IMR-90 (cell line): ENCODE measurements at regions of chr7 and their contacts with region 1.

Region 1: GRCh38 chr7:45033261-45033930 is 33.4 kb downstream of the CCM2 start:
- DNase-seq: peak; percentile 55
- ATAC-seq: peak; percentile 58
- H3K4me3 ChIP-seq: no peak overlapping the region
- H3K27ac ChIP-seq: peak overlapping the region; percentile 26; the same call in 1 of the 2 replicates
- H3K4me1 ChIP-seq: peaks cover 9% of the 10 kb centered on the region
- H3K27me3 ChIP-seq: no peaks in the 10 kb centered on the region
- CTCF ChIP-seq: no peak
- POLR2A ChIP-seq: no peak
- RAD21 ChIP-seq: no peak

Region 2: GRCh38 chr7:44398511-44398911 is 634.9 kb before region 1 on chr7:
- CTCF ChIA-PET with region 1: no interaction called
- POLR2A ChIA-PET with region 1: no interaction called
- dilution Hi-C with region 1: no loop called
- in situ Hi-C with region 1: no loop called
- intact Hi-C with region 1: no loop called
- DNase-seq: no peak
- ATAC-seq: no peak
- H3K4me3 ChIP-seq: no peak overlapping the region
- H3K27ac ChIP-seq: no peak overlapping the region
- H3K4me1 ChIP-seq: peaks cover 13% of the 10 kb centered on the region
- H3K27me3 ChIP-seq: no peaks in the 10 kb centered on the region
- CTCF ChIP-seq: no peak
- POLR2A ChIP-seq: no peak
- RAD21 ChIP-seq: no peak

Region 3: DNA sequence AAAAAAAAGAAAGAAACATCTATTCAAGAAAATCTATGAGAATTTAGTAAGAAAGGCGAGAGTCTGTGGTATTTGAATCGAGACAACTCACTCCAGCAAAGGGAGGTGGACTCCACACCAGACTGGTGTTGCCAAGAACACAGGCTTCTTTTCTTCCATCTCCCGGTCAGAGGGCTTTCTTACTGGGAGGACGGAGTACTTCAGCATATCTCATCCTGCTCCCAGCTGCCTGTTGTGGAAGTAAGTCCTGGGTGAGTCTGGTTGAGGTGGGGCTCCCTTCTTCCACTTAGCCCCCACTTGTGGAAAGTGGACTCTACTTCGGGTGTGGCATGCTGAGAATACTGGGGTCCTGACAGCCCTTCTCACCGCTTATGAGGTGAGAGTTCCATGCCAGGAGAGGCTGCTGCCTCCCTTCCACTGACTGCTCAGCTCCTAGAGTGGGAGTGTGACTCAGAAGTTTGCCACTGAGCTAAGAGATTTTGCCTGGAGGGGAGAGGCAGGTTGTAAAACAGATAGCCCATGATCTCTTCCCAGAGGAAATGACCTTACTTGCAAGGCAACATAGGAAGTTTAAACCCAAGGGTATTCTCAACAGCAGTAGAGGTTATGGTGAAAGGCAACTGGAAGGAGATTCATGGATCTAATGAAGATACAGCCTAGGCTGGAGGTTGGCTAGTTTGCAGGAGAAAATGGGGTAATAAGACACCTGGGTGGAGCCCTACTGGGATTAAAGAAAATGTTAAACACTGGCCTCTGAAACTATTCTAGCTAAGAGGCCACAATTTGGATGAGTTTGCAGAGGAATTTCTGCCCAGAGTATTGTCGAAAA is 58.9 kb after region 1 on chr7:
- CTCF ChIA-PET with region 1: no interaction called
- POLR2A ChIA-PET with region 1: interaction called, 3 read pairs
- dilution Hi-C with region 1: loop called (anchors 10 kb)
- in situ Hi-C with region 1: no loop called
- intact Hi-C with region 1: no loop called
- DNase-seq: peak; percentile 52
- ATAC-seq: peak; percentile 33; the same call in 1 of the 2 replicates
- H3K4me3 ChIP-seq: no peak overlapping the region
- H3K27ac ChIP-seq: no peak overlapping the region
- H3K4me1 ChIP-seq: peaks cover 4% of the 10 kb centered on the region; the same call in 1 of the 2 replicates
- H3K27me3 ChIP-seq: no peaks in the 10 kb centered on the region
- CTCF ChIP-seq: no peak
- POLR2A ChIP-seq: no peak
- RAD21 ChIP-seq: no peak